B cell (primary cell): ENCODE measurements at regions of chr11 and their contacts with region 1.

Region 1: GRCh38 chr11:44065841-44066731 is at the start of gene ACCS:
- DNase-seq: peak; percentile 94
- ATAC-seq: peak; percentile 96
- H3K4me3 ChIP-seq: peak within 1 kb of the TSS; percentile 32 to 85 (median 81)
- H3K4me3 Mint-ChIP-seq: peak within 1 kb of the TSS; percentile 97
- H3K27ac ChIP-seq: peak within 1 kb of the TSS; percentile 71 to 77
- H3K27ac Mint-ChIP-seq: peak within 1 kb of the TSS; percentile 91
- H3K4me1 ChIP-seq: peaks cover 6 to 18% of the 10 kb centered on the region in 2 donors
- H3K4me1 Mint-ChIP-seq: peaks cover 22% of the 10 kb centered on the region
- H3K27me3 ChIP-seq: no peaks in the 10 kb centered on the region
- H3K27me3 Mint-ChIP-seq: no peaks in the 10 kb centered on the region
- CTCF ChIP-seq: peak; percentile 87
- total RNA-seq, gene ACCS: 56.2 and 59.5 TPM in 2 replicates

Region 2: DNA sequence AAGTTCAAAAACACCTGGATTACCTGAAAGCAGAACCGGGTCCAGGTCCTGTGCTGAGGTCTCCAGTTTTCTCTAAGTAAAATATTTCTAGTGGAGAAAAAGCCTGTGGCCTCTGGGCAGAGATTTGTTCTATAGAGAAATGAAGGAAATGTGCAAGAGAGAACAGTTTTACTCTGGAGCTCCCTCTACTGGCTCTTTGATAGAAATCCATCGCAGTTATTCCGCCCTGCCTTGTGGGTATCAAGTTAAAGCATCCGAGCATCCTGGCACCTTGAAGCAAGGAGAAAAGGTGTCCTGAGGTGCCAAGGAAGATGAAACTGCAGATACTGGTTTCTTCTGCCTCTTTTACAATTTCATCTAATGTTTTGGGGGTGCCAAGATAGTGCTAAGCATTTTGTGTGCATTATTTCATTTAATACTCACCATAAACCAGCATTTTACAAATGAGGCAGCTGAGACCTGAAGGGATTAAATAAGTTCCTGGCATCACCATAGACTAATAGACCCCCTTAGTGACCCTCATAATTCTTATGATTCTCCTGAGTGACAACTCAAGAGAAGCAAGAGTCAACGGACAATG is 498.6 kb before region 1 on chr11:
- CTCF ChIA-PET with region 1: no interaction called
- POLR2A ChIA-PET with region 1: no interaction called
- intact Hi-C with region 1: no loop called
- DNase-seq: peak; percentile 36
- ATAC-seq: no peak
- H3K4me3 ChIP-seq: no peak overlapping the region
- H3K4me3 Mint-ChIP-seq: no peak overlapping the region
- H3K27ac ChIP-seq: no peak overlapping the region
- H3K27ac Mint-ChIP-seq: no peak overlapping the region
- H3K4me1 ChIP-seq: no peaks in the 10 kb centered on the region
- H3K4me1 Mint-ChIP-seq: no peaks in the 10 kb centered on the region
- H3K27me3 ChIP-seq: peaks cover 0 to 21% (median 11%) of the 10 kb centered on the region in 4 experiments
- H3K27me3 Mint-ChIP-seq: peaks cover 76% of the 10 kb centered on the region
- CTCF ChIP-seq: peak; percentile 71

Region 3: DNA sequence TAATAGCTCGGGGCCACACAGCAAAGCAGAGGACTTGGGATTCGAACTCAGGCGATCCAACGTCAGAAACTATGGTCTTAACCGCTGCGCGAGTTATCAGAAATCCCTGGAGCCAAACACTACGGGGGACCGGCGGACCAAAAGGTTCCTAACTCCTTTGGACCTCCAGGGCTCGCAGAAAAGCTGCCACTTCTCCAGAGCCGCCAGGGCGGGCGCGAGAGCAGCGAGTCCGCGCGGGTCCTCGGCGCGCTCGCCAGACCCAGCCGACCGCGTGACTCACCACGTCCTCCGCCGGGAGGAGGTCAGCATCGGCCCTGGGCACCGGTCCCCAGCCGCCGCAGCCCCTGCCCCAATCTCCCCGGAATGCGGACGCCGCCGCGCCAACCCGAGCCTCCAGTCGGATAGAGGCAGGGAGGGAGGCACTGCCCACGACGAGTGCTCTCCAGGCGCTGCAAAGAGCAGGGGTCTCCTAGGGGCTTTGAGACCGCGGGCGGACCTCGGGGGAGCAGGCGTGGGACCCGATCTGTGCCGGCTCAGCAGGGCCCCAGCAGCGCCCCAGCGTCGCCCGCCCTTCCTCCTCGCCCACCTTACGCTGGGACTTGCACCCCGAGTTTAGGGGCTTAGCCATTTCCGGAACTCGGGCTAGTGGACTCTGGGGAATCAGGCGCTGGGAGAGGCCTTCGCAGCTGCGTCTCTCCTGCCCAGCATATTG is 250.0 kb after region 1 on chr11:
- CTCF ChIA-PET with region 1: no interaction called
- POLR2A ChIA-PET with region 1: no interaction called
- intact Hi-C with region 1: no loop called
- DNase-seq: no peak
- ATAC-seq: no peak
- H3K4me3 ChIP-seq: peak overlapping the region in 2 of 5 experiments; percentile 20 to 24
- H3K4me3 Mint-ChIP-seq: peak overlapping the region; percentile 70
- H3K27ac ChIP-seq: no peak overlapping the region
- H3K27ac Mint-ChIP-seq: no peak overlapping the region
- H3K4me1 ChIP-seq: peaks cover 27 to 37% of the 10 kb centered on the region in 2 donors
- H3K4me1 Mint-ChIP-seq: peaks cover 25% of the 10 kb centered on the region
- H3K27me3 ChIP-seq: peaks cover 0 to 96% (median 78%) of the 10 kb centered on the region in 4 experiments
- H3K27me3 Mint-ChIP-seq: peaks cover 79% of the 10 kb centered on the region
- CTCF ChIP-seq: no peak

Region 4: DNA sequence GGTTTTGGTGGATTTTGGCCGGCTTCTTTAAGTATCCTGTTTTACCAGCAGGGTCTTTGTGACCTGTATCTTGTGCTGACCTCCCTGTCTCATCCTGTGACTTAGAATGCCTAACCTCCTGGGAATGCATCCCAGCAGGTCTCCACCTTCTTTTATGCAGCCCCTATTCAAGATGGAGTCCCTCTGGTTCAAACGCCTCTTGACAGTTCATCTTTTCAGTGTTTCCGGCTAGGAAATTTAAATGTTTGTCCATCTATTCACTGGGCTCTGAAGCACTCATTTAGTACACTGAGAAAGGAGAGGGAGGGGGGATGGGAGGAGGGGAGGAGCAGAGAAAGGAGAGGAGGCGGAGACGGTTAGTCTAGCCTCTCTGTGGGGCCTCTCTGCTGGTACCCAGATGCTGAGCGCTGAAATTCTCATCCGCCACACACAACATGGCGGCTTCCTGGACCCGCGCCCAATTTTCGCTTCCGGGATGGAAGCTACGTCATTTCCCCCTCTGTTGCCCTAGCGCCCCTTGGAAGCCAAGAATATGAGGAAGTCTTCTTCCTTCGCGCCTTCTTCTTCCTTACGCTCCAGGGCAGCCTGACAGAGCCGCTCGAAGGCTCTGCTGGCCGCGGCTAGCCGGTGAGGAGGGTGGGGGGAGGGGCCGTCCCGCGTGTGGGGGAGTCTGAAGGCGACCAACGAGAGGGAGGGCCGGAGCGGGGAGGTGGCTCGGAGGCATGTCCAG is 1289.1 kb after region 1 on chr11:
- CTCF ChIA-PET with region 1: no interaction called
- POLR2A ChIA-PET with region 1: no interaction called
- intact Hi-C with region 1: loop called (anchors 2 kb)
- DNase-seq: peak; percentile 94
- ATAC-seq: peak; percentile 96
- H3K4me3 ChIP-seq: peak overlapping the region; percentile 22 to 68 (median 63)
- H3K4me3 Mint-ChIP-seq: peak overlapping the region; percentile 83
- H3K27ac ChIP-seq: peak overlapping the region; percentile 43 to 64
- H3K27ac Mint-ChIP-seq: peak overlapping the region; percentile 90
- H3K4me1 ChIP-seq: peaks cover 13 to 17% of the 10 kb centered on the region in 2 donors
- H3K4me1 Mint-ChIP-seq: peaks cover 15% of the 10 kb centered on the region
- H3K27me3 ChIP-seq: peaks cover 0 to 6% (median 0%) of the 10 kb centered on the region in 4 experiments
- H3K27me3 Mint-ChIP-seq: peaks cover 30% of the 10 kb centered on the region
- CTCF ChIP-seq: no peak